AG04450 (cell line): ENCODE measurements at regions of chr4 and their contacts with region 1.

Region 1: DNA sequence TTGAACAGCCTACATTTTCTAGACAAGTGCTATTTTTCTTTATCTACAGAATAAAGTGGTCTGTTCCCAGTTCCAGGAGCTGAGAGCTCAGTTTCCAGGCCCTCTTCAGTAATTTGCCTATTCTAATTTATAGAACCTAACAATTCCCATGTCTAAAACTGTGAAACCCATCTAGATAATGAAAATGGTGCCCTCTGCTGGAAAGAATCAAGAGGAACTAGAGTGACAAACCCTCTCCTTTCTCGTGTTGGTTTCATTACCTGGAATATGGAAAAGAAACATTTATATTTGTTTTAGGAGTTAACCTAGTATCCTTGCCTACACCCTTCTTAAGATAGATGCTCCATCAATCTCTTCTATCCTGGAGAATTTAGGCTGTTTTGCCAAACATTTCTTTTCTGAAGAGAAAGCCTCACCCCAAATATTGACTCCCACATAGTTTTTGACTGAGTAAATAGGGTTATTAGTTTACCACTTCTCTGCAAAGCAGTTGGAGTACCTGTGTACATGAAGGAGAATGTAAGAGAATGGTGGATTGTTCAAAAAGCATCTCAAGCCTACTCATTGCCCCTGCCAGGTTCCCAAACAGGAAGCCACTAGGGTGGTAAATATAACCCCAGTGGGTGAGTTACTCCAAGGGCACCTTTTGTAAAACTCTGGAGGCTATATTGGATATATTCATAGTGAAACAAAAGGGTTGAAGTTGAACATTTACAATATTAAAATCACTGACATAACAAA is 121.6 kb downstream of the RASL11B start:
- DNase-seq: peak; percentile 21
- H3K4me3 ChIP-seq: no peak overlapping the region
- H3K27ac ChIP-seq: no peak overlapping the region
- H3K27me3 ChIP-seq: no peaks in the 10 kb centered on the region
- CTCF ChIP-seq: peak; percentile 69

Region 2: DNA sequence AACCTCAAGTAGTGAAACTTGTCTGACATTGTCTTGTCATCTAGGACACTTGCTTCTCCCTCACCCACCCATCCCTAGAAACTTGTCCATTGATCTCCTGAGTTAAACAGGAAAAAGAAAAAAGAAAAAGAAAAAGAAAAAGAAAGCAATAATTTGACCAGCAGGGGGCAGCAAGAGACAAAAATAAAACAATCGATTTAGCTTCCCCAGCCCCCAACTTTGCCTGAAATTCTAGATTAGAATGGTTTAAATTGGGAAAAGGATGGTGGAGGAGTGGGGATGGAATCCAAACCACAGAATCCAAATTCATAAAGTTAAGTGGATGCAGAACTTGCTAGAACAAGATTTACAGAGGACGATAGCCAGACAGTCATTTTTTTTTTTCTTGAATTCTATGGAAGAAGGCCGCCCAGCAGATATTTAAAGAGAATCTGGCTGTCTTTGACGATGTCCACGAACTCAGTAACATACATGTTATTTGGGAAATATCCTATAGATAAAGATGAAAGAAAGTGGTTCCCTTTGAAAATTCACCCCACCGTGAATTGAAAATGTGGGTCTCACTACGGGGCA is 607.5 kb before region 1 on chr4:
- CTCF ChIA-PET with region 1: interaction called, 122 read pairs
- POLR2A ChIA-PET with region 1: no interaction called
- DNase-seq: peak; percentile 7
- H3K4me3 ChIP-seq: no peak overlapping the region
- H3K27ac ChIP-seq: no peak overlapping the region
- H3K27me3 ChIP-seq: peaks cover 10% of the 10 kb centered on the region
- CTCF ChIP-seq: peak; percentile 52

Region 3: DNA sequence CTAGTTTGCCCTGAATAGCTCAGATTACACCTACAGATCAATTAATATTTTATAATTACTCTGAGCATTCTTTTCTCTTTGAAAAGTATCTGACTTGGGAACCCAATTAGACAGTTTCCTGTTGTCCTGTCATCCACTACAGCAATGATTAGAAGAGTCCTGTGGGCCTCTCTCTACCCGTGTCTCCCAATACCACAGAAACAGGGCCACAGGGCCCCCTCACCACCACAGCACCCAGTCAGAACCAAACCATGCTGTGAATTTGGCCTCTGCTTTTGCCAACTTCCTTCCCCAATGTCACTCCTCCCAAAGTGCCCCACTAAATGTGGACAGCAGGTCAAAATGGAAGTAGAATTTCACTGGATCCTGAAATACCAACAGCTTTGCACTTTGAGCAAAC is 334.9 kb before region 1 on chr4:
- CTCF ChIA-PET with region 1: interaction called, 20 read pairs
- POLR2A ChIA-PET with region 1: no interaction called
- DNase-seq: no peak
- H3K4me3 ChIP-seq: no peak overlapping the region
- H3K27ac ChIP-seq: no peak overlapping the region
- H3K27me3 ChIP-seq: no peaks in the 10 kb centered on the region
- CTCF ChIP-seq: no peak

Region 4: GRCh38 chr4:52712172-52712990 is 271.4 kb before region 1 on chr4:
- CTCF ChIA-PET with region 1: interaction called, 31 read pairs
- POLR2A ChIA-PET with region 1: no interaction called
- DNase-seq: peak; percentile 81
- H3K4me3 ChIP-seq: peak overlapping the region; percentile 90
- H3K27ac ChIP-seq: peak overlapping the region; percentile 33
- H3K27me3 ChIP-seq: peaks cover 2% of the 10 kb centered on the region
- CTCF ChIP-seq: no peak

Region 5: GRCh38 chr4:52838729-52839586 is 144.8 kb before region 1 on chr4:
- CTCF ChIA-PET with region 1: interaction called, 10 read pairs
- POLR2A ChIA-PET with region 1: no interaction called
- DNase-seq: no peak
- H3K4me3 ChIP-seq: no peak overlapping the region
- H3K27ac ChIP-seq: no peak overlapping the region
- H3K27me3 ChIP-seq: peaks cover 2% of the 10 kb centered on the region
- CTCF ChIP-seq: no peak

Region 6: GRCh38 chr4:52950226-52950625 is 33.5 kb before region 1 on chr4:
- CTCF ChIA-PET with region 1: no interaction called
- POLR2A ChIA-PET with region 1: no interaction called
- DNase-seq: no peak
- H3K4me3 ChIP-seq: no peak overlapping the region
- H3K27ac ChIP-seq: no peak overlapping the region
- H3K27me3 ChIP-seq: no peaks in the 10 kb centered on the region
- CTCF ChIP-seq: no peak